ENCODE measurements at regions of chr6 and their contacts with region 1.

Region 1: GRCh38 chr6:166989427-166990032 is 9.7 kb upstream of the CEP43 start:
- DNase-seq: no peak
- ATAC-seq: no peak

Region 2: GRCh38 chr6:166786704-166787293 is 202.7 kb before region 1 on chr6:
- intact Hi-C with region 1: loop called (anchors 2 kb)
- DNase-seq: no peak
- ATAC-seq: peak; percentile 54

Region 3: DNA sequence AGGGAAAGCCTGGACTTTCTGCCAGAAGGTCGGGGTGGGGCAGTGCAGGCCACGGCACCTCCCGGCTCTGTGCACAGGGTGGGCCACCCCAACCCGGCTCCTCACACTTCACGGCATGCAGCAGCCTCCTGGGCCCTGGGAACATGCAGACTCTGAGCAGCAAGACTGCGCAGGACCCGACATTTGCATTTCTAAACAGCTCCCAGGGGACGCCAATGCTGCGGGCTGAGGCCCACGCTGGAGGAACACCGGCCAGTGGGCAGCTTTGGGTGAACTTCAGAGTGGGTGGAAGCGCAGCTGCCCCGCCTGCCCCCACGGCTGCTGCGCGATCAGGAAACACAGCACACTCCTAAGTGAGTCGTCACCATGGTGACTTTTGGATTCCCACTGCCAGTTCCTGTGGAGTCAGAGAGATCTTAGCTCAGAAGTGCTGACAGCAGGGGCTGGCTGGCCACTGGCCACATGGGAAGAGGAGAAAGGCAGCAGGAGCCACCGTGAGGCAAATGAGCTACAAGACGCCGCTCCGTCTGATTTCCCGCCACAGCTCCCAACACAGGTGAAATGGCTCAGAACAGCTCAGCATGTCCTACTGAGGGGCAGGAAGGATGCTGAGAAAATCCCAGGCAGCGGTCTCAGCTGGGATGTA is 85.3 kb before region 1 on chr6:
- intact Hi-C with region 1: no loop called
- DNase-seq: no peak
- ATAC-seq: no peak

Measured in Right ventricle myocardium inferior (tissue), 1 donor.